ENCODE measurements at regions of chr2 and their contacts with region 1.

Region 1: GRCh38 chr2:120174963-120175581 is 48.1 kb downstream of the TMEM185B start:
- DNase-seq: no peak
- ATAC-seq: no peak
- H3K4me3 Mint-ChIP-seq: no peak overlapping the region
- H3K27ac Mint-ChIP-seq: peak overlapping the region; percentile 46
- H3K4me1 Mint-ChIP-seq: peaks cover 40% of the 10 kb centered on the region
- H3K27me3 Mint-ChIP-seq: no peaks in the 10 kb centered on the region

Region 2: GRCh38 chr2:119678998-119679710 is 495.9 kb before region 1 on chr2 and contains the start of gene TMEM177:
- POLR2A ChIA-PET with region 1: interaction called, 15 read pairs
- DNase-seq: peak; percentile 94
- ATAC-seq: peak; percentile 90
- H3K4me3 Mint-ChIP-seq: peak within 1 kb of the TSS; percentile 87
- H3K27ac Mint-ChIP-seq: peak within 1 kb of the TSS; percentile 81
- H3K4me1 Mint-ChIP-seq: peaks cover 18% of the 10 kb centered on the region
- H3K27me3 Mint-ChIP-seq: peaks cover 4% of the 10 kb centered on the region
- total RNA-seq, gene TMEM177: 9.0 to 13.1 TPM

Region 3: GRCh38 chr2:120109186-120110061 is 65.6 kb before region 1 on chr2:
- POLR2A ChIA-PET with region 1: interaction called, 21 read pairs
- DNase-seq: no peak
- ATAC-seq: peak; percentile 84
- H3K4me3 Mint-ChIP-seq: peak overlapping the region; percentile 65
- H3K27ac Mint-ChIP-seq: peak overlapping the region; percentile 63
- H3K4me1 Mint-ChIP-seq: peaks cover 27% of the 10 kb centered on the region
- H3K27me3 Mint-ChIP-seq: no peaks in the 10 kb centered on the region

Region 4: GRCh38 chr2:120223034-120223912 is 48.2 kb after region 1 on chr2 and contains the start of gene TMEM185B:
- POLR2A ChIA-PET with region 1: interaction called, 11 read pairs
- DNase-seq: peak; percentile 95
- ATAC-seq: peak; percentile 91
- H3K4me3 Mint-ChIP-seq: peak within 1 kb of the TSS; percentile 87
- H3K27ac Mint-ChIP-seq: peak within 1 kb of the TSS; percentile 84
- H3K4me1 Mint-ChIP-seq: peaks cover 59% of the 10 kb centered on the region
- H3K27me3 Mint-ChIP-seq: no peaks in the 10 kb centered on the region
- total RNA-seq, gene TMEM185B: 23.4 to 26.2 TPM

Region 5: GRCh38 chr2:120231974-120232635 is 57.0 kb after region 1 on chr2:
- POLR2A ChIA-PET with region 1: interaction called, 20 read pairs
- DNase-seq: peak; percentile 72
- ATAC-seq: peak; percentile 93
- H3K4me3 Mint-ChIP-seq: peak overlapping the region; percentile 99
- H3K27ac Mint-ChIP-seq: peak overlapping the region; percentile 99
- H3K4me1 Mint-ChIP-seq: peaks cover 40% of the 10 kb centered on the region
- H3K27me3 Mint-ChIP-seq: no peaks in the 10 kb centered on the region

Region 6: DNA sequence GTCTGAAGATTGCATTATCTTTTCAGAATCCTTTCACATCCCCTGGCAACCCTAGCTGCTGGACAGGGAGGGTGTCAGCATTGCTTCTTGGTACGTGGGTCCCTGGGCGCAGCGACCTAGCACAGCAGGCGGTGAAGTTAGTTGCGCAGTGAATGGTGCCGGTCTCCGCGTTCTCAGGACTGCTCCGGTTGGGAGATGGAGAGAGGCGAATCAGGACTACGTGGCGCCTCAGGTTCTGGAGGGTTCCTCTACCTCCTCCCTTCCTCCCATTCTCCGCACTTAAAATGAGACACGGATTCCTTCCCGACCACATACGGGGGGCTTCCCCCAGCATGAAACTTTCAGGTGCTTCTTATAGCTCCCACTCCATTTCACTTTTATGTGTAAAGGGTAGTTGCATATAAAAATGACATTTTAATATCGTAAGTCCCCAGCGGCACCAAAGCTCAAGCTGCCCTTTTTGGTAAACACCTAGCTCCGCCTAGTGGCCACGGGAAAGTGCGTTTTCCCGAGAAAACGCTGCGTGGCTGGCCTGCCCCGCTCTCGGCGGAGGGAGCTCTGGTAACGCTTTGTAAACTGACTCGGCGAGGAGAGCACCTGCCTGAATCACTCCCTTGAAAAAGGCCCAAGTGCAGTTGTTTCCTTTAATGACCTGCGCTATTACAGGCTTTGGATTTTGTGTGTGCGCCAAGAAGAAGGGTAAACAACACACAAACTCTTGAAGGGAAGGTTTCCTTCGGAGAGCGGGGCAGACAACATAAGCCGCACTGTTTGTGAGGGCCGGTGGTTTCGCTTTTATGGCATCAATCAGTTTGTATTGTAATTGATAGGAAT is 138.0 kb after region 1 on chr2:
- POLR2A ChIA-PET with region 1: interaction called, 42 read pairs
- DNase-seq: peak; percentile 81
- ATAC-seq: peak; percentile 73
- H3K4me3 Mint-ChIP-seq: peak overlapping the region; percentile 80
- H3K27ac Mint-ChIP-seq: peak overlapping the region; percentile 80
- H3K4me1 Mint-ChIP-seq: peaks cover 32% of the 10 kb centered on the region
- H3K27me3 Mint-ChIP-seq: no peaks in the 10 kb centered on the region